H1 (cell line): ENCODE measurements at regions of chr2 and their contacts with region 1.

Region 1: DNA sequence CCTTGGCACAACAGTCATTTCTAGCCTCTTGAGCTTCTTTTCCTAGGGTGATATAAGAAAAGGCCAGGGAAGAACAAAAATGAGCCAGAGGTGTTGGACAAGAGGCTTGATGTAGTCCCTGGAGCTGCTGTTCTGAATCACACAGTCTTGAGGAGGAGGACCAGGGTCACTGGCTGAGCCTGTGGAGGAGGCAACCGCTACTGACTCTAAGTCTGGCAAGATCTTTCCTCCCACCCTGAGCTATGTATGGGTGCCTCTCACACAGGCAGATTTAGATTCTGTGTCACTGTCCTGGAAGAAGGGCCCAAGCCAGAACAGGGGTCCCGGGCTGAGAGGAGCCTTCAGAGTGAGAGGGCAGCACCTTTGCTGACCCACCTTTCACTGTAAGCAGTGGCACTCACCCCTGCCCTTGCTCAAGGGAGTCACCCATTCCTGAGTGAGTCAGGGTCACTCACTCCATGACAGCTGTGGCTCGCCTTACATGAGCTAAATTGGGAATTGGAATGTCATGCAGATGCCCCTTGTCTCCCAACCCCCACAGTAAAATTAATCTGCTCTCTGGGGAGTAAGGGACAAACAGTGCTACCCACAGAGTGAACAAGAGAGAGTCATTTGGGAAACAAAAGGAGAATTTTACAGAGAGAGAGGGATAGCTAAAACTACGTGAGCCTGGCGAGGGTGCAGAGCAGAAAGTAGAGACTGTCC is at the start of gene TRIM54:
- DNase-seq: no peak
- H3K4me3 ChIP-seq: peak within 1 kb of the TSS; percentile 1 to 43 (median 35); a peak in 7 of 8 replicates
- H3K27ac ChIP-seq: no peak within 1 kb of the TSS
- H3K4me1 ChIP-seq: peaks cover 4 to 18% (median 13%) of the 10 kb centered on the region in 4 experiments
- H3K27me3 ChIP-seq: peaks cover 0 to 4% (median 0%) of the 10 kb centered on the region in 4 experiments; a peak in 1 of 7 replicates
- CTCF ChIP-seq: no peak
- EP300 ChIP-seq: no peak
- POLR2A ChIP-seq: no peak
- RAD21 ChIP-seq: no peak
- total RNA-seq, gene TRIM54: 3.9 and 4.2 TPM in 2 replicates

Region 2: DNA sequence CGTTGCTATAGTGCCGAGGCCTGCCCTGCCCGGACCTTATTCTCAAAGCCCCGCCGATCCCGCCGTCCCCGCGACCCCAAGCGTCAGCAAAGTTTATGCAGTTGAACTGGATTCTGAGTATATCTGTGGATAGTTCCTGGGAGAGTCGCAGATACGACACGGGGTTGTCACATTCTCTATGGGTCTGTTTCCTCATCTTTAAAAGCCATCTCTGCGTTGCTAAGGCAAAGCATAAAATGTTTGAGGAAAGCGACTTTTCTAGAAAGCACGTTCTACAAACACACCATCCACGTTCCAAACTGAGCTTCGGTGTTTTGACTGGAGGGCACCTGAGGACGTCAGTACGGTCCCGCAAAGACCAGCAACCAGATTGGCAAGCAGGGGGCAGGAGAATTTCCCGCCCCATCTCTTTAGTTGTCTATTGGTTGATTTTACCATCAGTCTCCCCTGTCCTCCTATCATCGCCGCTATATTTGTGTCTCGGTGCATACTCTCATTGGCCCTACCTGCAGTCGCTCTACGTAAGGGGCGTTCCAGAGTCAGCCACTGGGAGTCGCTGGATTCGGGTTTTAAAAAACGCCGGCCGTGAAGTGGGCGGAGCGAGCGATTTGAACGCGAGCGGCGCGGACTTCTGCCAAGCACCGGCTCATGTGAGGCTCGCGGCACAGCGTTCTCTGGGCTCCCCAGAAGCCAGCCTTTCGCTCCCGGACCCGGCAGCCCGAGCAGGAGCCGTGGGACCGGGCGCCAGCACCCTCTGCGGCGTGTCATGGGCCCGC is 496.4 kb before region 1 on chr2 and contains the start of gene CENPA:
- CTCF ChIA-PET with region 1: no interaction called
- POLR2A ChIA-PET with region 1: no interaction called
- DNase-seq: peak; percentile 93 to 96
- H3K4me3 ChIP-seq: peak within 1 kb of the TSS; percentile 71 to 87 (median 74)
- H3K27ac ChIP-seq: no peak within 1 kb of the TSS
- H3K4me1 ChIP-seq: peaks cover 0 to 1% (median 0%) of the 10 kb centered on the region in 4 experiments; a peak in 2 of 7 replicates
- H3K27me3 ChIP-seq: peaks cover 0 to 5% (median 4%) of the 10 kb centered on the region in 4 experiments; a peak in 2 of 7 replicates
- CTCF ChIP-seq: 0 out of 4 replicates have a peak, but pooled peaks of 1 of the 3 experiments have one; percentile 6
- EP300 ChIP-seq: no peak
- POLR2A ChIP-seq: peak; percentile 57 to 81
- RAD21 ChIP-seq: no peak
- total RNA-seq, gene CENPA: 28.5 and 30.9 TPM in 2 replicates

Region 3: GRCh38 chr2:27095745-27096651 is 186.0 kb before region 1 on chr2:
- CTCF ChIA-PET with region 1: interaction called, 12 read pairs
- POLR2A ChIA-PET with region 1: no interaction called
- DNase-seq: peak in 1 of 2 experiments; percentile 81
- H3K4me3 ChIP-seq: peak overlapping the region; percentile 14 to 53 (median 40); a peak in 5 of 8 replicates
- H3K27ac ChIP-seq: no peak overlapping the region
- H3K4me1 ChIP-seq: peaks cover 0 to 2% (median under 1%) of the 10 kb centered on the region in 4 experiments; a peak in 2 of 7 replicates
- H3K27me3 ChIP-seq: no peaks in the 10 kb centered on the region
- CTCF ChIP-seq: no peak
- EP300 ChIP-seq: no peak
- POLR2A ChIP-seq: no peak
- RAD21 ChIP-seq: no peak

Region 4: GRCh38 chr2:27211829-27212627 is 70.0 kb before region 1 on chr2 and contains the starts of genes ATRAID and SLC5A6:
- CTCF ChIA-PET with region 1: interaction called, 5 read pairs
- POLR2A ChIA-PET with region 1: interaction called, 10 read pairs
- DNase-seq: peak; percentile 59 to 93
- H3K4me3 ChIP-seq: peak within 1 kb of the TSS; percentile 77 to 97 (median 90)
- H3K27ac ChIP-seq: peak within 1 kb of the TSS; percentile 99
- H3K4me1 ChIP-seq: peaks cover 0 to 6% (median 2%) of the 10 kb centered on the region in 4 experiments; a peak in 5 of 7 replicates
- H3K27me3 ChIP-seq: no peaks in the 10 kb centered on the region
- CTCF ChIP-seq: no peak
- EP300 ChIP-seq: no peak
- POLR2A ChIP-seq: peak; percentile 68 to 97
- RAD21 ChIP-seq: no peak
- total RNA-seq, gene ATRAID: 103 and 109 TPM in 2 replicates
- total RNA-seq, gene SLC5A6: 118 and 123 TPM in 2 replicates

Region 5: GRCh38 chr2:27241761-27242613 is 40.0 kb before region 1 on chr2:
- CTCF ChIA-PET with region 1: interaction called, 55 read pairs
- POLR2A ChIA-PET with region 1: interaction called, 149 read pairs
- DNase-seq: no peak
- H3K4me3 ChIP-seq: no peak overlapping the region
- H3K27ac ChIP-seq: no peak overlapping the region
- H3K4me1 ChIP-seq: no peaks in the 10 kb centered on the region
- H3K27me3 ChIP-seq: no peaks in the 10 kb centered on the region
- CTCF ChIP-seq: no peak
- EP300 ChIP-seq: no peak
- POLR2A ChIP-seq: no peak
- RAD21 ChIP-seq: no peak

Region 6: DNA sequence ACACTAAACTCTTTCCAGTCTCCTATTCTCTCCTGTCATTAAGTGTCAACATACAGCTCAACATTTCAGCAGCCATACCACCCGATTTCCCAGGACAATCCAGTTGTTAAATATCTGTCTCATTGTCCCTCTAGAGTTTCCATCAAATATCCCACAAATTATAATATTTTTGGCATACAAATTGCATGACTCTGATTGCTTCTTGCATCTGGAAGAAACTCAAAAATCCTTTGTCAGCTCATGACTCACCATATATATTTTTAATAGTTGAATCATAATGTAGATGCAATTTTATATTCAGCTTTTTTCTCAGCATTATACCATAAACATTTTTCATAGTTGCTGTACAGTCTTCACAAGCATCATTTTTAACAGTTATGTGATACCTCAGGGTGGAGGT is 26.3 kb before region 1 on chr2:
- CTCF ChIA-PET with region 1: interaction called, 288 read pairs
- POLR2A ChIA-PET with region 1: interaction called, 149 read pairs
- DNase-seq: no peak
- H3K4me3 ChIP-seq: no peak overlapping the region
- H3K27ac ChIP-seq: no peak overlapping the region
- H3K4me1 ChIP-seq: peaks cover 0 to 8% (median 4%) of the 10 kb centered on the region in 4 experiments; a peak in 6 of 7 replicates
- H3K27me3 ChIP-seq: peaks cover 0 to 12% (median 7%) of the 10 kb centered on the region in 4 experiments; a peak in 5 of 7 replicates
- CTCF ChIP-seq: no peak
- EP300 ChIP-seq: no peak
- POLR2A ChIP-seq: no peak
- RAD21 ChIP-seq: no peak

Region 7: DNA sequence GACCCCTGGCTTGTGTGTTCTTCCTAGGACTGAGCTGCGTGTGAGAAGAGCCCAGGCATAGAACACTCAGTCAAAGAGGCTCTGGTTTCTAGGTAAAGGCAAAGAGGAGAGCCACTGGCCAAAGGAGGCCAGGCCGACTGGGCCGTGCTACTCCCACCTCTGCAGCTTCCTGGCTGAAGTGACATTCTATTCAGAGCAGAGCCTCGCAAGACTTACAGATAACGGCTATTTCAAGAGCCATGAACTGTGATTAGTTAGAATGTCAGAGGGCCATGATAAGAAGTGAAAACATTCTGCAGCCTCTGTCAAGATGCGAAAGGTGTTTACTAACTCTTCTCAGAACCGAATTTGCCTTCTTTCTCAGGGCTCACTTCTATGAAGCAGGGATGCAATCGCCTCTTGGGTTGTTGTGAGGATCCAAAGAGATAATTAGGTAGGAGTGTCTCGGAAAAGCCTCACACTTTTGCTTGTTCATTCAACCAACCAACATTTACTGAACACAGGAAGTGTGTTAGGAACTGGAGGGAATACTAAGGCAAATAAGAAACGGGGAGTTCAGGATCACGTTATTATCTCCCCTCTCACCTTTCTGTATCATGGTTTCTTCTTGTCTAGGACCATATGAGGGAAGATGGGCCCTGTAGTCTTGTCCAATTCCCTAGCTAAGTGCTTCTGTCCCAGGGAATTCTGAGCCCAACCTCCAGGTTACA is 10.2 kb before region 1 on chr2:
- CTCF ChIA-PET with region 1: interaction called, 288 read pairs
- POLR2A ChIA-PET with region 1: interaction called, 63 read pairs
- DNase-seq: no peak
- H3K4me3 ChIP-seq: no peak overlapping the region
- H3K27ac ChIP-seq: no peak overlapping the region
- H3K4me1 ChIP-seq: peaks cover 0 to 5% (median 0%) of the 10 kb centered on the region in 4 experiments; a peak in 2 of 7 replicates
- H3K27me3 ChIP-seq: peaks cover 0 to 7% (median 2%) of the 10 kb centered on the region in 4 experiments; a peak in 2 of 7 replicates
- CTCF ChIP-seq: no peak
- EP300 ChIP-seq: no peak
- POLR2A ChIP-seq: no peak
- RAD21 ChIP-seq: no peak

Region 8: DNA sequence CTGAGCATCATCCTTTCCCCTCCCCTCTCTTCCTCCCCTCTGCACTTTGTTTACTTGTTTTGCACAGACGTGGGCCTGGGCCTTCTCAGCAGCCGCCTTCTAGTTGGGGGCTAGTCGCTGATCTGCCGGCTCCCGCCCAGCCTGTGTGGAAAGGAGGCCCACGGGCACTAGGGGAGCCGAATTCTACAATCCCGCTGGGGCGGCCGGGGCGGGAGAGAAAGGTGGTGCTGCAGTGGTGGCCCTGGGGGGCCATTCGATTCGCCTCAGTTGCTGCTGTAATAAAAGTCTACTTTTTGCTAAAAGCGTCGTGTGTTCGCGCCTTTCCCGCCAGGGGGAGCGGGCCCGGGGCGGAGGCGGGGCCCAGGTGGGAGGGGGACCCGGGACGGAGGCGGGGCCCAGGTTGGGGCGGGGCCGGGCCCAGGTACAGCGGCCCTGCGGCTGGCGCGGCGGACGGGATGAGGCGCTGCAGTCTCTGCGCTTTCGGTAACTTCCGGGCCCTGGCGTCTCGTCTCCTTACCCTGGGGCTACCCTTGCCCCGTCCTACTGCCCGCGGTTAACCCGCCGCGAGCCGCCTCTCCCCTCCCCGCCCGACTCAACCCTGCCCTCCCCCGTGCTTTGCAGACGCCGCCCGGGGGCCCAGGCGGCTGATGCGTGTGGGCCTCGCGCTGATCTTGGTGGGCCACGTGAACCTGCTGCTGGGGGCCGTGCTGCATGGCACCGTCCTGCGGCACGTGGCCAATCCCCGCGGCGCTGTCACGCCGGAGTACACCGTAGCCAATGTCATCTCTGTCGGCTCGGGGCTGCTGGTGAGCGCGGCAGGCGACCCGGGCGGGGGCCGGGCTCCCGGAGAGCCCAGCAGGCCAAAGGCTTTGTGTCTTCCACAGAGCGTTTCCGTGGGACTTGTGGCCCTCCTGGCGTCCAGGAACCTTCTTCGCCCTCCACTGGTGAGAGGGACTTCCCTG is 160.2 kb after region 1 on chr2 and contains the start of gene KRTCAP3:
- CTCF ChIA-PET with region 1: no interaction called
- POLR2A ChIA-PET with region 1: no interaction called
- DNase-seq: peak; percentile 53 to 94
- H3K4me3 ChIP-seq: peak within 1 kb of the TSS; percentile 49 to 76 (median 63)
- H3K27ac ChIP-seq: no peak within 1 kb of the TSS
- H3K4me1 ChIP-seq: peaks cover 0 to 14% (median 8%) of the 10 kb centered on the region in 4 experiments; a peak in 5 of 7 replicates
- H3K27me3 ChIP-seq: no peaks in the 10 kb centered on the region
- CTCF ChIP-seq: peak; percentile 9 to 66 (median 62)
- EP300 ChIP-seq: no peak
- POLR2A ChIP-seq: peak; percentile 40 to 57; a peak in 2 of 3 replicates
- RAD21 ChIP-seq: peak; percentile 26 to 42; a peak in 2 of 4 replicates
- total RNA-seq, gene KRTCAP3: 50.1 and 55.4 TPM in 2 replicates